ENCODE measurements at regions of chr3 and their contacts with region 1.

Region 1: GRCh38 chr3:113211330-113212149 is at the start of gene BOC:
- DNase-seq: peak; percentile 55 to 72 (median 66)
- H3K4me3 ChIP-seq: peak within 1 kb of the TSS; percentile 83
- H3K27ac ChIP-seq: peak within 1 kb of the TSS; percentile 82 to 91
- H3K4me1 ChIP-seq: peaks cover 4% of the 10 kb centered on the region
- H3K27me3 ChIP-seq: no peaks in the 10 kb centered on the region
- CTCF ChIP-seq: no peak
- EP300 ChIP-seq: no peak
- POLR2A ChIP-seq: peak; percentile 36
- total RNA-seq, gene BOC: 33.2 to 98.5 (median 59.5) TPM

Region 2: GRCh38 chr3:112730193-112730592 is 481.3 kb before region 1 on chr3:
- intact Hi-C with region 1: no loop called
- DNase-seq: no peak
- H3K4me3 ChIP-seq: no peak overlapping the region
- H3K27ac ChIP-seq: no peak overlapping the region
- H3K4me1 ChIP-seq: no peaks in the 10 kb centered on the region
- H3K27me3 ChIP-seq: no peaks in the 10 kb centered on the region
- CTCF ChIP-seq: no peak
- EP300 ChIP-seq: no peak
- POLR2A ChIP-seq: no peak

Region 3: GRCh38 chr3:113051302-113051711 is 160.2 kb before region 1 on chr3:
- intact Hi-C with region 1: loop called in 1 of 4 experiments (anchors 10 kb)
- DNase-seq: peak; percentile 78 to 92 (median 86)
- H3K4me3 ChIP-seq: peak overlapping the region; percentile 11
- H3K27ac ChIP-seq: peak overlapping the region in 1 of 2 donors; percentile 31
- H3K4me1 ChIP-seq: peaks cover 4% of the 10 kb centered on the region
- H3K27me3 ChIP-seq: no peaks in the 10 kb centered on the region
- CTCF ChIP-seq: peak; percentile 55 to 99 (median 96)
- EP300 ChIP-seq: no peak
- POLR2A ChIP-seq: no peak

Region 4: DNA sequence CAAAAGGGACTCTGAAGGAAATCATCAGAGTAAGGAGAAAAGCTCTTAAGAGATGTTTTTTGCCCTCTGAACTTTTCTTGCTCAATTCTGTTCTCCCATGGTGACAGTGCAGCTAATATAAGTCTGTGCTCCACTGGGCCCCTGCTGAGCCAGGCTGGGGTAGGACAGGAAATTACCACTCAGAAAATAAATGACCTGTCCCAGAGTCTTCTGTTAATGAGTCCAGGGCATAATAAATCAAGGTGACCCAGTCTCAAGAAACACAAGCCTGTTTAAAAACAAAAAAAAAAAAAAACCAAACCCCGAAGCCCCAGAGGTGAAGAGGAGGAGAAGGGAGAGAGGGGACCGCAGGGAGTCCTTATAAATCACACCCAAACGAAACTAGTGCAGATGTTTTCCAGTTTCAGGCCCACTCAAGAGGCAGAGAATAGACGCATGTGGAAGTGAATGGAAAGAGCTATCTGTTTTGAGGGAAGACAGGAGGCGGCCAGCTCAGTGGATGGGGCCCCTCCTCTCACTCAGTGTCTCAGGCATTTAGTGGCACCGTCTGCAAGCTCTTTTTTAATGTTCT is 60.0 kb before region 1 on chr3:
- intact Hi-C with region 1: loop called in 3 of 4 experiments (anchors 2 to 10 kb)
- DNase-seq: peak in 3 of 5 donors; percentile 40 to 59 (median 47)
- H3K4me3 ChIP-seq: no peak overlapping the region
- H3K27ac ChIP-seq: peak overlapping the region in 1 of 2 donors; percentile 55
- H3K4me1 ChIP-seq: peaks cover 6% of the 10 kb centered on the region
- H3K27me3 ChIP-seq: no peaks in the 10 kb centered on the region
- CTCF ChIP-seq: no peak
- EP300 ChIP-seq: no peak
- POLR2A ChIP-seq: no peak

Region 5: DNA sequence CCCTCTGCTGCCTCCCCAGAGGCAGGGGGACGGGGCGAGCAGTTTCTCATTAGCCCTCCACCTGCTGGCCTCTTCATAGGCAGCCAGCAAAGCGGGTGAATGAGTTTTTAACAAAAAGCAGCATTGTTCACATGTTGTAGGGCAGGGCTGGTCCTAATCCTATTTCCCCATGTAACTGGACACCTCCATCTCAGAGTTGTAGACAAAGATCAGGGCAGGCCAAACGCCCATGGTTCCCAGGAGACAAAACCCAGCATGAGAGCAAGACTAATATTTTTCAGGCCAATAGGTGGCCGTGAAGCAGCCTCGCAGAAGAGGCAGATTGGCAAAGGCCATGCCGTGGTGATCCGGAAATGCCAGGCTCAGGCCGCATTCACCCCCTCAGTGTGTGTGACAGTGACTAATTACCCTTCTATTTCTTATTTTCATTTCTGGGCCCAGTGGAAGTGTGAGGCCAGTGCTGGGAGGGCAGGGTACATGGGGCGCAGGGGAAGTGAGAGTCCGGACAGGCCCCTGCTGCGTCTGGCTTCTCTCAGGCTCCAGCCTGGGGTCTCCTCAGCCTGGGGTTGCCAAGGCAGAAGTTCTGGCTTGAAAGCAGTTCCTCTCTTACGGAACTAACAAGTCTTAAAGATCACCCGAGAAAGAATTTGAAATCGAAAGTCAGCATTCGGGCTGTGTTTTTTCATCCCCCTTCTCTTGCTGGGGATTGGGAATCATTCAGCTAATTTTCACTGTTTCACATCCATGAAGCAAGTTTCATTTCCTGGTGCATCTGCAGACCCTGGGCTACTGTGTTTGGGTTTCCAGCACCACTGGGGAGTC is 64.6 kb after region 1 on chr3:
- intact Hi-C with region 1: loop called in 1 of 4 experiments (anchors 5 kb)
- DNase-seq: peak in 3 of 5 donors; percentile 41 to 61 (median 42)
- H3K4me3 ChIP-seq: no peak overlapping the region
- H3K27ac ChIP-seq: peak overlapping the region; percentile 49 to 82
- H3K4me1 ChIP-seq: no peaks in the 10 kb centered on the region
- H3K27me3 ChIP-seq: no peaks in the 10 kb centered on the region
- CTCF ChIP-seq: peak in 1 of 3 donors; percentile 16
- EP300 ChIP-seq: no peak
- POLR2A ChIP-seq: no peak

Region 6: GRCh38 chr3:113287803-113288648 is 76.5 kb after region 1 on chr3:
- intact Hi-C with region 1: loop called in 1 of 4 experiments (anchors 2 kb)
- DNase-seq: peak in 4 of 5 donors; percentile 56 to 79 (median 66)
- H3K4me3 ChIP-seq: no peak overlapping the region
- H3K27ac ChIP-seq: peak overlapping the region in 1 of 2 donors; percentile 51
- H3K4me1 ChIP-seq: peaks cover 19% of the 10 kb centered on the region
- H3K27me3 ChIP-seq: no peaks in the 10 kb centered on the region
- CTCF ChIP-seq: peak; percentile 80 to 99 (median 98)
- EP300 ChIP-seq: no peak
- POLR2A ChIP-seq: no peak

Region 7: GRCh38 chr3:113329757-113330156 is 118.2 kb after region 1 on chr3:
- intact Hi-C with region 1: no loop called
- DNase-seq: no peak
- H3K4me3 ChIP-seq: no peak overlapping the region
- H3K27ac ChIP-seq: no peak overlapping the region
- H3K4me1 ChIP-seq: no peaks in the 10 kb centered on the region
- H3K27me3 ChIP-seq: no peaks in the 10 kb centered on the region
- CTCF ChIP-seq: no peak
- EP300 ChIP-seq: no peak
- POLR2A ChIP-seq: no peak

Measured in ovary (tissue), 10 donors.